ENCODE measurements at regions of chr21 and their contacts with region 1.

Region 1: GRCh38 chr21:34888569-34889319 is 160.4 kb downstream of the RUNX1 start:
- DNase-seq: peak; percentile 79
- ATAC-seq: peak; percentile 44
- H3K4me3 ChIP-seq: peak overlapping the region; percentile 32 to 80 (median 62)
- H3K4me3 Mint-ChIP-seq: peak overlapping the region; percentile 94
- H3K27ac ChIP-seq: peak overlapping the region; percentile 50 to 82
- H3K27ac Mint-ChIP-seq: peak overlapping the region; percentile 93
- H3K4me1 ChIP-seq: peaks cover 49 to 58% of the 10 kb centered on the region in 2 donors
- H3K4me1 Mint-ChIP-seq: peaks cover 49% of the 10 kb centered on the region
- H3K27me3 ChIP-seq: peaks cover 0 to 13% (median 2%) of the 10 kb centered on the region in 4 experiments
- H3K27me3 Mint-ChIP-seq: no peaks in the 10 kb centered on the region
- CTCF ChIP-seq: no peak

Region 2: GRCh38 chr21:34801519-34802132 is 87.1 kb before region 1 on chr21:
- CTCF ChIA-PET with region 1: interaction called, 13 read pairs
- POLR2A ChIA-PET with region 1: no interaction called
- intact Hi-C with region 1: loop called (anchors 1 kb)
- DNase-seq: peak; percentile 55
- ATAC-seq: peak; percentile 70
- H3K4me3 ChIP-seq: no peak overlapping the region
- H3K4me3 Mint-ChIP-seq: no peak overlapping the region
- H3K27ac ChIP-seq: peak overlapping the region in 1 of 2 donors; percentile 25
- H3K27ac Mint-ChIP-seq: no peak overlapping the region
- H3K4me1 ChIP-seq: no peaks in the 10 kb centered on the region
- H3K4me1 Mint-ChIP-seq: peaks cover 20% of the 10 kb centered on the region
- H3K27me3 ChIP-seq: no peaks in the 10 kb centered on the region
- H3K27me3 Mint-ChIP-seq: no peaks in the 10 kb centered on the region
- CTCF ChIP-seq: peak; percentile 68

Region 3: DNA sequence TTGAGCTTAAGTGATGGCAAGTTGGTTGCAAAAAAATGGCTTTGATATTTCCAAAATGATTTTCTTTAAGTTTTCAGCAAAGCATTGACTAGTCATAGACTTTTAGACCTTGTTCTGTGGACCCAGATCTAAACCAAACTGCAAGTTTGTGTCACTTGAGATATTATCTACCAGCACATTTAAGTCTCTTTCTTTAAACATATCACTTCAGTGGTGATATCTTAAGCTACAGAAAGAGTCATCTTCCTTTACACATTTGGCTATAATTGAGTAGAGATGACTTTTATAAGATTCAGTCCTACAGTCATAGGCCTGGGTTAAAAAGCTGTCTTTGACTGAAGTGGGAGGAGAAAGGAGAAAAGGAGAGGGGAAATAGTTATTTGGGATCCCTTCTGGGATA is 65.2 kb after region 1 on chr21:
- CTCF ChIA-PET with region 1: no interaction called
- POLR2A ChIA-PET with region 1: no interaction called
- intact Hi-C with region 1: no loop called
- DNase-seq: no peak
- ATAC-seq: no peak
- H3K4me3 ChIP-seq: no peak overlapping the region
- H3K4me3 Mint-ChIP-seq: no peak overlapping the region
- H3K27ac ChIP-seq: no peak overlapping the region
- H3K27ac Mint-ChIP-seq: no peak overlapping the region
- H3K4me1 ChIP-seq: no peaks in the 10 kb centered on the region
- H3K4me1 Mint-ChIP-seq: peaks cover 20% of the 10 kb centered on the region
- H3K27me3 ChIP-seq: no peaks in the 10 kb centered on the region
- H3K27me3 Mint-ChIP-seq: no peaks in the 10 kb centered on the region
- CTCF ChIP-seq: no peak

Region 4: GRCh38 chr21:34979383-34979782 is 90.6 kb after region 1 on chr21:
- CTCF ChIA-PET with region 1: interaction called, 3 read pairs
- POLR2A ChIA-PET with region 1: interaction called, 3 read pairs
- intact Hi-C with region 1: loop called (anchors 5 kb)
- DNase-seq: no peak
- ATAC-seq: no peak
- H3K4me3 ChIP-seq: no peak overlapping the region
- H3K4me3 Mint-ChIP-seq: no peak overlapping the region
- H3K27ac ChIP-seq: no peak overlapping the region
- H3K27ac Mint-ChIP-seq: no peak overlapping the region
- H3K4me1 ChIP-seq: peaks cover 17 to 23% of the 10 kb centered on the region in 2 donors
- H3K4me1 Mint-ChIP-seq: peaks cover 30% of the 10 kb centered on the region
- H3K27me3 ChIP-seq: no peaks in the 10 kb centered on the region
- H3K27me3 Mint-ChIP-seq: no peaks in the 10 kb centered on the region
- CTCF ChIP-seq: no peak

Region 5: DNA sequence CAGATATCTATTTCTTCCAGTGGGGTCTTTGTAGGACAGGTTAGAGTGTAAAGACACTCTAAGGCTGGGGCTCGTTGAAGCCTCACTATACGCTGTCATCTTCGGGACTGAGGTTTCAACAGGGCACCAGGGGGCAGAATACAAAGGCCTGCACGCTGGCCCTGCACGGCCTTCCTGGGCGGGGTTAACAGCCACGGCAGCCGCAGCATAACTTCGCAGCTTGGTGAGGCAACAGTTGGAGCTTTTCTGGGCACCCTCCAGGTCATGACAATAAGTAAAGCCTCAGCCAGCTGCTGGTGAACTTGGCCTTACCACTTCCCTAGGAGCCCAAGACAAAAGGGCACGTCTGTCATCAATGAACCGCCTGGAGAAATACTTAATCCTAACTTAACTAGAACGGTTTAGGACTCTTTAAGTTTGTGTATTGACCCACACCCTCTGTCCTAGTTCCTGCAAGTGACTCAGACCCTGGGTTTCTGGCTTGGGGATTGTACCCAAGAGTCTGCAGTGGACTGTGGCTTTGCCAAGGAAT is 162.6 kb after region 1 on chr21:
- CTCF ChIA-PET with region 1: interaction called, 131 read pairs
- POLR2A ChIA-PET with region 1: interaction called, 21 read pairs
- intact Hi-C with region 1: loop called (anchors 1 kb)
- DNase-seq: peak; percentile 83
- ATAC-seq: peak; percentile 37
- H3K4me3 ChIP-seq: peak overlapping the region in 1 of 5 experiments; percentile 27
- H3K4me3 Mint-ChIP-seq: peak overlapping the region; percentile 82
- H3K27ac ChIP-seq: peak overlapping the region; percentile 51 to 69
- H3K27ac Mint-ChIP-seq: peak overlapping the region; percentile 96
- H3K4me1 ChIP-seq: peaks cover 33 to 39% of the 10 kb centered on the region in 2 donors
- H3K4me1 Mint-ChIP-seq: peaks cover 56% of the 10 kb centered on the region
- H3K27me3 ChIP-seq: no peaks in the 10 kb centered on the region
- H3K27me3 Mint-ChIP-seq: no peaks in the 10 kb centered on the region
- CTCF ChIP-seq: peak; percentile 62

Region 6: GRCh38 chr21:35226948-35227744 is 338.4 kb after region 1 on chr21:
- CTCF ChIA-PET with region 1: interaction called, 5 read pairs
- POLR2A ChIA-PET with region 1: no interaction called
- intact Hi-C with region 1: loop called (anchors 2 kb)
- DNase-seq: peak; percentile 80
- ATAC-seq: peak; percentile 84
- H3K4me3 ChIP-seq: peak overlapping the region in 1 of 5 experiments; percentile 4
- H3K4me3 Mint-ChIP-seq: peak overlapping the region; percentile 72
- H3K27ac ChIP-seq: peak overlapping the region; percentile 5 to 68
- H3K27ac Mint-ChIP-seq: peak overlapping the region; percentile 78
- H3K4me1 ChIP-seq: peaks cover 26% of the 10 kb centered on the region in 2 donors
- H3K4me1 Mint-ChIP-seq: peaks cover 29% of the 10 kb centered on the region
- H3K27me3 ChIP-seq: no peaks in the 10 kb centered on the region
- H3K27me3 Mint-ChIP-seq: peaks cover 12% of the 10 kb centered on the region
- CTCF ChIP-seq: no peak

Region 7: DNA sequence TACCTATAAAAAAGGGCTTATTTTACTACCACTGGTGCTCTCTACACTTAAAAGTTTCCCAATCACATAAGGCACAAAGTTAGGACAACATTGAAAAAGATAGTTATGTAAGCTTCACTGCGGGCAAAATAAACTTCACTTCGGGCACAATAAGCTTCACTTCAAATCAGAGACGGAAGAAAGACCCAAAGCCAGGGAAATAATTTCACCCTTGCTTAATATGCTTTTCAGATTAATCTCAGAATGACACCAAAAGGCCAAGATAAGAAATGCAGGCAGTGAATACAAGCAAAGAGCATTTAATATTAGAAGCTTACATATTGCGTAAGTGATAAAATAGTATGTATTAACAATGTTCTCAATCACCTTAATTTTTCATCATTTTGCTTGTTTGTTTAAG is 727.3 kb after region 1 on chr21:
- CTCF ChIA-PET with region 1: interaction called, 6 read pairs
- POLR2A ChIA-PET with region 1: no interaction called
- intact Hi-C with region 1: loop called (anchors 10 kb)
- DNase-seq: peak; percentile 28
- ATAC-seq: no peak
- H3K4me3 ChIP-seq: no peak overlapping the region
- H3K4me3 Mint-ChIP-seq: no peak overlapping the region
- H3K27ac ChIP-seq: no peak overlapping the region
- H3K27ac Mint-ChIP-seq: no peak overlapping the region
- H3K4me1 ChIP-seq: no peaks in the 10 kb centered on the region
- H3K4me1 Mint-ChIP-seq: peaks cover 2% of the 10 kb centered on the region
- H3K27me3 ChIP-seq: peaks cover 0 to 4% (median 2%) of the 10 kb centered on the region in 4 experiments
- H3K27me3 Mint-ChIP-seq: peaks cover 15% of the 10 kb centered on the region
- CTCF ChIP-seq: peak; percentile 46

Region 8: DNA sequence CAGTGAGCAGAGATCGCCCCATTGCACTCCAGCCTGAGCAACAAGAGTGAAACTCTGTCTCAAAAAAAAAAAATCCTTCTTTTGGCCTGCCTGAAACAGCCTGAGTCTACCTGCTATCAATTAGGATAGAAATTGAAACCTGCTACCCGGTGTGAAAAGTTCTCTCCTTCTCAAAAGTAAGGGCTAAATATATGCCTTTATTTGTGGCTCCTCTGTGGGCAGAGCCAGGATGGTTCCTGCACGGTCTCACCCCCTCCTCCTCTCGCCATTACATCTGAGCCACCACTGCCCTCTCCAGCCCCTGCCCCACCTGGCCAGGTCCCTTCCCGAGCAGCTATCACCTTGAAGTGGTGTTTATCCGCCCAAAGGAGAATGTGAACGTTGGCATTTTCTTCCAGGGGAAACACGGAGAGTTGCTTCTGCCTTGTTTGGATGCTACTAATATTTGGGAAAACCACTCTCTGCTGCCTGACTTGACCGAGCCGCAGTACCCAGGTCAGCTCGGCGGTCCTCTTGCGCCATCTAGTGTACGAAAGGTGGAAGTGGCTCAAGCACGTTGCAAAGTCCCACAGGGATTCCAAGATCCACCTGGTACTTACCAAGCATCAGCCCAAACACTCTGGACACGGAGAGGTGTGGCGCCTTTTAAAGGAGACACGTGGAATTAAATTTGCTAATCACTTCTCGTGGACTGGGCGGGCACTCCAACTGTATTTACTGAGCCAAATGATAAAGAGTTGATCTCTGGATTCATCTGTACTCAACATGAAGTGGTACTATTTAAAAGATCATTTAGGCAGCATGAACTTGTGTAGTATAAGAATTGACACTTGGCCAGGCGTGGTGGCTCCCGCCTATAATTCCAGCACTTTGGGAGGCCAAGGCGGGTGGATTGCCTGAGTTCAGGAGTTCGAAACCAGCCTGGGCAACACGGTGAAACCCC is 1139.7 kb after region 1 on chr21:
- CTCF ChIA-PET with region 1: interaction called, 3 read pairs
- POLR2A ChIA-PET with region 1: no interaction called
- intact Hi-C with region 1: loop called (anchors 1 kb)
- DNase-seq: peak; percentile 80
- ATAC-seq: peak; percentile 87
- H3K4me3 ChIP-seq: no peak overlapping the region
- H3K4me3 Mint-ChIP-seq: no peak overlapping the region
- H3K27ac ChIP-seq: no peak overlapping the region
- H3K27ac Mint-ChIP-seq: no peak overlapping the region
- H3K4me1 ChIP-seq: peaks cover 0 to 6% of the 10 kb centered on the region in 2 donors
- H3K4me1 Mint-ChIP-seq: peaks cover 5% of the 10 kb centered on the region
- H3K27me3 ChIP-seq: no peaks in the 10 kb centered on the region
- H3K27me3 Mint-ChIP-seq: no peaks in the 10 kb centered on the region
- CTCF ChIP-seq: peak; percentile 97